Activated T-helper 1 cell treated with anti-CD3 and anti-CD28 coated beads, Interleukin-12 subunit alpha, Interleukin-12 subunit beta, Interleukin-2, Interleukin-4 antibody, amounts not matched to agents 30 ng/mL and 10 ng/mL and 1 ng/mL, durations not matched to agents 14 hours and 24 hours and 36 hours (primary cell): ENCODE measurements at regions of chr3 and their contacts with region 1.

Region 1: GRCh38 chr3:72520690-72521308 is 327.4 kb downstream of the SHQ1 start:
- DNase-seq: peak; percentile 20
- H3K4me3 Mint-ChIP-seq: peak overlapping the region; percentile 16
- H3K27ac Mint-ChIP-seq: peak overlapping the region; percentile 88
- H3K4me1 Mint-ChIP-seq: peaks cover 56% of the 10 kb centered on the region
- H3K27me3 Mint-ChIP-seq: no peaks in the 10 kb centered on the region

Region 2: GRCh38 chr3:71984843-71985613 is 535.8 kb before region 1 on chr3:
- intact Hi-C with region 1: loop called (anchors 1 kb)
- DNase-seq: peak; percentile 21
- H3K4me3 Mint-ChIP-seq: peak overlapping the region; percentile 62
- H3K27ac Mint-ChIP-seq: peak overlapping the region; percentile 91
- H3K4me1 Mint-ChIP-seq: peaks cover 62% of the 10 kb centered on the region
- H3K27me3 Mint-ChIP-seq: no peaks in the 10 kb centered on the region

Region 3: DNA sequence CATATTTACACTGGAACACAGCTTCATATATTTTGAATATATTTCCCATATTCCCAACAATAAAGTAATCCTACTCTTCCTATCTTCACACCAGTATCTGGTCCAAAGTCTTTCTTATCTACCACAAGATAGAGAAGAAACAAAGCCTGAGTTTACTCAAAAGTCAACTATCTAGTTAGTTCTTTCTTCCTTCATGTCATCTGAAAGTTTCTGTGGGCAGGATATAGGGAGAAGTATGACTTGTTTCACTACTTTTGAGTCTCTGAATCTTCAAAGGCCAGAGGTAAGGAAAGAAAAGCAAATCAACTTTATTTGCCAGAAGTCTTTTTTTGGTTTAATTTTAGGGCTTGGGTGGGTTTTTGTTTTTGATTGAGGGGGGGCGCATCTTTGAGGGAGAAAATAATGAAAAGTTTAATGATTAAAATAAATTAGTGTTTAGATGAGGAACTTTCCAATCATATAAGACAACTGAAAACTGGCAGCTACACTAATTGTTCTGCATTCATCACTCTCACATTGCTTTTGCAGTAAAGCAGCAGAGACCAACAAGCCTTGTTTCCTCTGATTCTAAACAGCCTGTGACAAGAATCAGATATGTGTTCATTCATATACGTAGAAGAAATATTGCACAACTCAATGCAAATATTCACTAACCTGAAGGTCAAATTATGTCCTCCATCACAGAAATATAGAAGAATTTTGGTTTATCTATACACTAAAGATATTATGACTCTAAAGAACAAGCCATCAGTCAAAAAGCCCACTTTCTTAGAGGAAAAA is 94.0 kb before region 1 on chr3:
- intact Hi-C with region 1: loop called (anchors 1 kb)
- DNase-seq: no peak
- H3K4me3 Mint-ChIP-seq: peak overlapping the region; percentile 69
- H3K27ac Mint-ChIP-seq: peak overlapping the region; percentile 97
- H3K4me1 Mint-ChIP-seq: peaks cover 62% of the 10 kb centered on the region
- H3K27me3 Mint-ChIP-seq: no peaks in the 10 kb centered on the region

Region 4: DNA sequence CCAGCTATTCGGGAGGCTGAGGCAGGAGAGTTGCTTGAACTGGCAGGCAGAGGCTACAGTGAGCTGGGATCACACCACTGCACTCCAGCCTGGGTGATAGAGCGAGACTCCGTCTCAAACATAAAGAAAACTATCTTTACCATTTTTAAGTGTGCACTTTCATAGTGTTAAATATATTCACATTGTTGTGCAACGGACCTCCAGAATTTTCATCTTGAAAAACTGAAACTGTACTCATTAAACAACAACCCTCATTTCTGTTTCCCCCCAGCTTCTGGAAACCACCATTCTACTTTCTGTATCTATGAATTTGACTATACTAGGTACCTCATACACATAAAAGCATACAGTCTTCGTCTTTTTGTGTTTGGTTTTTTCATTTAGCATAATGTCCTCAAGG is 47.6 kb before region 1 on chr3:
- intact Hi-C with region 1: loop called (anchors 1 kb)
- DNase-seq: no peak
- H3K4me3 Mint-ChIP-seq: no peak overlapping the region
- H3K27ac Mint-ChIP-seq: peak overlapping the region; percentile 57
- H3K4me1 Mint-ChIP-seq: peaks cover 31% of the 10 kb centered on the region
- H3K27me3 Mint-ChIP-seq: no peaks in the 10 kb centered on the region

Region 5: GRCh38 chr3:72538070-72538745 is 17.4 kb after region 1 on chr3:
- intact Hi-C with region 1: loop called (anchors 1 kb)
- DNase-seq: no peak
- H3K4me3 Mint-ChIP-seq: no peak overlapping the region
- H3K27ac Mint-ChIP-seq: peak overlapping the region; percentile 36
- H3K4me1 Mint-ChIP-seq: peaks cover 45% of the 10 kb centered on the region
- H3K27me3 Mint-ChIP-seq: peaks cover 3% of the 10 kb centered on the region

Region 6: GRCh38 chr3:72618739-72619138 is 97.9 kb after region 1 on chr3:
- intact Hi-C with region 1: no loop called
- DNase-seq: no peak
- H3K4me3 Mint-ChIP-seq: no peak overlapping the region
- H3K27ac Mint-ChIP-seq: no peak overlapping the region
- H3K4me1 Mint-ChIP-seq: peaks cover 16% of the 10 kb centered on the region
- H3K27me3 Mint-ChIP-seq: no peaks in the 10 kb centered on the region

Region 7: GRCh38 chr3:72800869-72801268 is 280.1 kb after region 1 on chr3:
- intact Hi-C with region 1: loop called (anchors 1 kb)
- DNase-seq: no peak
- H3K4me3 Mint-ChIP-seq: no peak overlapping the region
- H3K27ac Mint-ChIP-seq: peak overlapping the region; percentile 31
- H3K4me1 Mint-ChIP-seq: peaks cover 8% of the 10 kb centered on the region
- H3K27me3 Mint-ChIP-seq: no peaks in the 10 kb centered on the region

Region 8: GRCh38 chr3:72847751-72848702 is 327.2 kb after region 1 on chr3 and contains the start of gene SHQ1:
- intact Hi-C with region 1: no loop called
- DNase-seq: peak; percentile 92
- H3K4me3 Mint-ChIP-seq: peak within 1 kb of the TSS; percentile 99
- H3K27ac Mint-ChIP-seq: peak within 1 kb of the TSS; percentile 88
- H3K4me1 Mint-ChIP-seq: peaks cover 62% of the 10 kb centered on the region
- H3K27me3 Mint-ChIP-seq: peaks cover 9% of the 10 kb centered on the region
- total RNA-seq, gene SHQ1: 46.1 and 48.5 TPM in 2 replicates